Tibial artery (tissue), 4 donors: ENCODE measurements at regions of chr2 and their contacts with region 1.

Region 1: DNA sequence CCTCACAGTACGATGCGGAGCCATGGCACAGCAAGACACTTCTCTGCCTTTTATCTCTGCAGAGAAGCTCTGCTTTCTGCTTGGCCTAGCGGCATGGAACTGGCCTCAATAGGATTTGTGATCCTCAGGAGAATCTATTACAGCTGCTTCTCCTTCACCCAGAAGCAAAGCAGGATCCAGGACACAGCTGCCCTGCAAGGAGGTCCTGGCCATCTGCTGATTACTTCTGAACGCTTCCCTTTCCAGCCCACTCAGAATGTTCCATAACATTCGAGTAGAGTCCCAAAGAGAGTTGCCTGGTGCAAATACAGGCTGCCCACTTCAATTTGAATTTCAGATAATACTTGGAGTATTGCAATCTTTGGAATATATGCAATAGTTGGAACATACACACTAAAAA is 29.2 kb upstream of the KCNS3 start:
- DNase-seq: no peak
- H3K4me3 ChIP-seq: no peak overlapping the region
- H3K27ac ChIP-seq: no peak overlapping the region
- H3K4me1 ChIP-seq: no peaks in the 10 kb centered on the region
- H3K27me3 ChIP-seq: peaks cover 0 to 2% of the 10 kb centered on the region in 2 donors
- CTCF ChIP-seq: no peak

Region 2: DNA sequence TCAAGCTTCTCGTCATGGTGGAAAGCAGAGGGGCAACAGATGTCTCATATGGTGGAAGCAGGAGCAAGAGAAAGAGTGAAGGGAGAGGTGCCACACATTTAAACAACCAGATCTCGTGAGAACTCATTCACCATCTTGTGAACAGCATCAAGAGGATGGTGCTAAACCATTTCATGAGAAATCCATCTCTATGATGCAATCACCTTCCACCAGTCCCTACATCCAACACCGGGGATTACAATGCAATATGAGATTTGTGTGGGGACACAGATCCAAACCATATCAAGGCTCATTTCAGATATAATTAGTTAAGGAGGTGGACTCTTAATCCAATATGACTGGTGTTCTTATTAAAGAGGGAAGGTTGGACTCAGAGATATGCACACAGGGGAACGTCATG is 302.0 kb after region 1 on chr2:
- intact Hi-C with region 1: loop called (anchors 1 kb)
- DNase-seq: no peak
- H3K4me3 ChIP-seq: no peak overlapping the region
- H3K27ac ChIP-seq: no peak overlapping the region
- H3K4me1 ChIP-seq: no peaks in the 10 kb centered on the region
- H3K27me3 ChIP-seq: no peaks in the 10 kb centered on the region
- CTCF ChIP-seq: no peak